Gastrocnemius medialis (tissue), 4 donors: ENCODE measurements at regions of chr3 and their contacts with region 1.

Region 1: GRCh38 chr3:161600173-161600572 is 103.6 kb downstream of the OTOL1 start:
- DNase-seq: no peak
- ATAC-seq: no peak
- H3K4me3 ChIP-seq: no peak overlapping the region
- H3K27ac ChIP-seq: no peak overlapping the region
- H3K4me1 ChIP-seq: no peaks in the 10 kb centered on the region
- H3K27me3 ChIP-seq: no peaks in the 10 kb centered on the region
- CTCF ChIP-seq: no peak
- POLR2A ChIP-seq: no peak

Region 2: DNA sequence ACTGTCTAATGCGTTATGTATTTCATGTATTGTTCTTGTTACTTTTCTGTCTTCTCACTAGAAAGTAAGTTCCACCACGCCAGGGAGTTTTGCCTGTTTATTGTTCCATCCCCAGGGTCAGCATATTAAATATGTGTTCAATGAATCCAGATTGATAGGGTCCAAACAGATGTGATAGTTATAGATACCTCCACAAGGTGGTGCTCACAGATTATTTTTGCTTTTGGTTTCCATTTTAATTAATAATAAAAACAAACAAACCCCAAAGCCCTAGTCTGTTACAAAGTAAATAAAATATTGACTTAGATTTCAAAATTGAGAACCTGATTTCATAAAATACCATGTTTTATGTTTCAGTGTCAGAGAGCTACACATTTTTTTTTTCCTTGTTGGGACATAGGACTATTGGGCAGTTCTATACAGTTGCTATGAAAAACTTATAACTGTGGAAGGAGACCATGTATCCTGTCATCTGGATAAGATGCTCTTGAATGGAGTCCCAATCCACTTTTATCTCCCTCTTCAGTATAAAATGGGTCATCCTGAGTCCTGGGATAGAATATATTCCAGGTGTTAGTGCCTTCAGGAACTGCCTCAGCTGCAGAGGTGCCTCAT is 91.2 kb before region 1 on chr3:
- in situ Hi-C with region 1: loop called in 1 of 4 experiments (anchors 25 kb)
- intact Hi-C with region 1: no loop called
- DNase-seq: no peak
- ATAC-seq: no peak
- H3K4me3 ChIP-seq: no peak overlapping the region
- H3K27ac ChIP-seq: no peak overlapping the region
- H3K4me1 ChIP-seq: no peaks in the 10 kb centered on the region
- H3K27me3 ChIP-seq: no peaks in the 10 kb centered on the region
- CTCF ChIP-seq: no peak
- POLR2A ChIP-seq: no peak

Region 3: DNA sequence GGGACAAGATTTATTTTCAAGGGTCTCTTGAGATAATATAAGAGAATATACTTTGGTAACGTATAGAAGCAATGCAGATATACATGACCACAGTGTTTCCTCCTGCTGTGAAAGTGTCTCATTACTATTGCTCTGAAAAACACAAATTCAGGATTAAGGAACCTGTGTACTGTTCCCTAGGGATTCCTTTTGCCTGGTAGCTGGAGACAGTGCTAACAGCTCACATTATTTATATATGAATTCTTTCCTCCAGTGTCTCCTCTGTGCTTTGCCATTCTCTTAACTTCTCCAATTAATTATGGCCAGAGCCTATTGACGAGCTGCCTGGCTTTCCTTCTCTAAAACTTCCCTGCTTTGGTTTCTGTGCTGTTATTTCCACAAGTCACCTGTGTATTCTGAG is 131.8 kb after region 1 on chr3:
- in situ Hi-C with region 1: no loop called
- intact Hi-C with region 1: loop called (anchors 5 kb)
- DNase-seq: no peak
- ATAC-seq: no peak
- H3K4me3 ChIP-seq: no peak overlapping the region
- H3K27ac ChIP-seq: no peak overlapping the region
- H3K4me1 ChIP-seq: no peaks in the 10 kb centered on the region
- H3K27me3 ChIP-seq: no peaks in the 10 kb centered on the region
- CTCF ChIP-seq: no peak
- POLR2A ChIP-seq: no peak

Region 4: GRCh38 chr3:161754420-161755053 is 154.4 kb after region 1 on chr3:
- in situ Hi-C with region 1: no loop called
- intact Hi-C with region 1: no loop called
- DNase-seq: no peak
- ATAC-seq: no peak
- H3K4me3 ChIP-seq: no peak overlapping the region
- H3K27ac ChIP-seq: no peak overlapping the region
- H3K4me1 ChIP-seq: no peaks in the 10 kb centered on the region
- H3K27me3 ChIP-seq: no peaks in the 10 kb centered on the region
- CTCF ChIP-seq: no peak
- POLR2A ChIP-seq: no peak